HCT116 (cell line): ENCODE measurements at regions of chr2 and their contacts with region 1.

Region 1: DNA sequence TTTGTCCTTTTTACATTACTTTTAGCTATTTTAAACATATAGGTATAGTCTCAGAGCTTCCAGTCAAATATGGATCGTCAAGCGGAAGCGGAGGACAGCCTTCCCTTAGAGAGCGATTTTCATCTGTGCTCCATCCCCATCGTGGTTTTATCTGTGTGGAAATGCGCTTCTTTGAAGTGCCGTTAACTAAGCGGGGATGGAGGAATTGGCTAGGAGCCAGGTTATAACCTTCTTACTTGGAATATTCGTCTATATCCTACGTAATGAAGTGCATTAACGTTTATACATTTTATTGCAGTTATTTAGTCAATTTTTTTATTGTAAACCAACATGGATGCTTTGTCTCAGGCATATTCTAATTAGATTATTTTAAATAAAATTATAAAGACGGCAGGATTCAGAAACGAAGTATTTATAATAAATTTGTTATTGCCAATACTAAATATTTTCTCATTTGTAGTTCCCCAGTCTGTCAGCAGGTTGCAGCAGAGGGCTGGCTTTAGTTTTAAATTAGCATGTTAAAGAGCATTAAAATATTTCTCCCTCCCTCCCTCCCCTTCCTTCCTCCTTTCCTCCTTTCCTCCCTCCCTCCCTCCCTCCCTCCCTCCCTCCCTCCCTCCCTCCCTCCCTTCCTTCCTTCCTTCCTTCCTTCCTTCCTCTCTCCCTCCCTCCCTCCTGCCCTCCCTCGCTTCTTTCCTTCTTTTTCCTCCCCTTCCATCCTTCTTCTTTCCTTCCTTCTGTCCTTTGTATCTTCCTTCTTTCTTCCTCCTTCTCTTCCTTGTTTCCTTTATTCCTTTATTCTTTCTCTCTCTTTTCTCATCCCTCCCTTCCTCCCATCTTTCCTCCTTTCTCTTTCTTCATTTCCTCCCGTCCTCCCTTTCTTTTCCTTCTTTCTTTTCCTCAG is 80.6 kb upstream of the DOCK10 start:
- DNase-seq: no peak
- ATAC-seq: peak; percentile 60; the same call in 1 of the 2 replicates
- H3K4me3 ChIP-seq: no peak overlapping the region
- H3K27ac ChIP-seq: no peak overlapping the region
- H3K4me1 ChIP-seq: peaks cover 0 to 11% of the 10 kb centered on the region in 2 experiments; a peak in 2 of 4 replicates
- H3K27me3 ChIP-seq: no peaks in the 10 kb centered on the region
- CTCF ChIP-seq: peak in 2 of 3 experiments; percentile 38 to 39; a peak in 4 of 6 replicates
- POLR2A ChIP-seq: no peak
- RAD21 ChIP-seq: peak; percentile 62

Region 2: GRCh38 chr2:225282858-225283710 is 160.2 kb after region 1 on chr2:
- CTCF ChIA-PET with region 1: interaction called, 3 read pairs
- POLR2A ChIA-PET with region 1: no interaction called
- RAD21 ChIA-PET with region 1: interaction called in 1 of 2 experiments, 4 read pairs
- intact Hi-C with region 1: loop called (anchors 2 kb)
- DNase-seq: peak; percentile 31
- ATAC-seq: peak; percentile 87
- H3K4me3 ChIP-seq: no peak overlapping the region
- H3K27ac ChIP-seq: no peak overlapping the region
- H3K4me1 ChIP-seq: no peaks in the 10 kb centered on the region
- H3K27me3 ChIP-seq: no peaks in the 10 kb centered on the region
- CTCF ChIP-seq: peak; percentile 52 to 83 (median 79); a peak in 5 of 6 replicates
- POLR2A ChIP-seq: no peak
- RAD21 ChIP-seq: peak; percentile 71

Region 3: DNA sequence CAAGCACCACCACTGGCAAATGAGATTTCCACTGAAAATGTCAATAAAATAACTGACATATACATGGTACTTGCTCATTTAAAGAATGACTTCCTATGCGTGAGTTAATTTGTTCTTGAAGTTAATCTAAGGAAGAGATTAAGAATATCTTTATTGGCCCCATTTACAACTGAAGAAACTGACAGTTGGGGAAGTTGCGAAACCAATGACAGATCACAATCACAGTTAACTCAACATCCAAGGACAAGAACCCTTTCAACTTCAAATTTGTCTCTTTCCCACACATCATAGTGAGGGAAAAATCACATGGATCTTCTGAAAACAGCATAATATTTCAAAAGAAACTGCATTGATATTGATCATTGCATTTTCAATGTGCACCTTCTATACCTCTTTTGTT is 1111.3 kb after region 1 on chr2:
- CTCF ChIA-PET with region 1: no interaction called
- POLR2A ChIA-PET with region 1: no interaction called
- RAD21 ChIA-PET with region 1: no interaction called
- intact Hi-C with region 1: no loop called
- DNase-seq: no peak
- ATAC-seq: no peak
- H3K4me3 ChIP-seq: no peak overlapping the region
- H3K27ac ChIP-seq: no peak overlapping the region
- H3K4me1 ChIP-seq: no peaks in the 10 kb centered on the region
- H3K27me3 ChIP-seq: no peaks in the 10 kb centered on the region
- CTCF ChIP-seq: no peak
- POLR2A ChIP-seq: no peak
- RAD21 ChIP-seq: no peak